Endothelial cell of umbilical vein (primary cell): ENCODE measurements at regions of chr12 and their contacts with region 1.

Region 1: GRCh38 chr12:86914716-86915115 is 658.5 kb upstream of the MGAT4C start:
- DNase-seq: peak; percentile 69
- H3K4me3 ChIP-seq: no peak overlapping the region
- H3K27ac ChIP-seq: no peak overlapping the region
- H3K4me1 ChIP-seq: no peaks in the 10 kb centered on the region
- H3K27me3 ChIP-seq: no peaks in the 10 kb centered on the region
- CTCF ChIP-seq: peak; percentile 34 to 56
- POLR2A ChIP-seq: no peak

Region 2: GRCh38 chr12:85468356-85469157 is 1446.2 kb before region 1 on chr12:
- CTCF ChIA-PET with region 1: interaction called, 3 read pairs
- POLR2A ChIA-PET with region 1: no interaction called
- dilution Hi-C with region 1: no loop called
- intact Hi-C with region 1: loop called (anchors 5 kb)
- DNase-seq: peak; percentile 80
- H3K4me3 ChIP-seq: peak overlapping the region in 2 of 3 experiments; percentile 41 to 67
- H3K27ac ChIP-seq: no peak overlapping the region
- H3K4me1 ChIP-seq: no peaks in the 10 kb centered on the region
- H3K27me3 ChIP-seq: peaks cover 0 to 2% of the 10 kb centered on the region in 2 experiments
- CTCF ChIP-seq: peak; percentile 64 to 69
- POLR2A ChIP-seq: no peak

Region 3: GRCh38 chr12:85951823-85952222 is 962.9 kb before region 1 on chr12:
- CTCF ChIA-PET with region 1: interaction called, 78 read pairs
- POLR2A ChIA-PET with region 1: no interaction called
- dilution Hi-C with region 1: no loop called
- intact Hi-C with region 1: loop called (anchors 1 kb)
- DNase-seq: peak; percentile 55
- H3K4me3 ChIP-seq: no peak overlapping the region
- H3K27ac ChIP-seq: no peak overlapping the region
- H3K4me1 ChIP-seq: peaks cover 4% of the 10 kb centered on the region
- H3K27me3 ChIP-seq: no peaks in the 10 kb centered on the region
- CTCF ChIP-seq: peak; percentile 17 to 25
- POLR2A ChIP-seq: no peak

Region 4: DNA sequence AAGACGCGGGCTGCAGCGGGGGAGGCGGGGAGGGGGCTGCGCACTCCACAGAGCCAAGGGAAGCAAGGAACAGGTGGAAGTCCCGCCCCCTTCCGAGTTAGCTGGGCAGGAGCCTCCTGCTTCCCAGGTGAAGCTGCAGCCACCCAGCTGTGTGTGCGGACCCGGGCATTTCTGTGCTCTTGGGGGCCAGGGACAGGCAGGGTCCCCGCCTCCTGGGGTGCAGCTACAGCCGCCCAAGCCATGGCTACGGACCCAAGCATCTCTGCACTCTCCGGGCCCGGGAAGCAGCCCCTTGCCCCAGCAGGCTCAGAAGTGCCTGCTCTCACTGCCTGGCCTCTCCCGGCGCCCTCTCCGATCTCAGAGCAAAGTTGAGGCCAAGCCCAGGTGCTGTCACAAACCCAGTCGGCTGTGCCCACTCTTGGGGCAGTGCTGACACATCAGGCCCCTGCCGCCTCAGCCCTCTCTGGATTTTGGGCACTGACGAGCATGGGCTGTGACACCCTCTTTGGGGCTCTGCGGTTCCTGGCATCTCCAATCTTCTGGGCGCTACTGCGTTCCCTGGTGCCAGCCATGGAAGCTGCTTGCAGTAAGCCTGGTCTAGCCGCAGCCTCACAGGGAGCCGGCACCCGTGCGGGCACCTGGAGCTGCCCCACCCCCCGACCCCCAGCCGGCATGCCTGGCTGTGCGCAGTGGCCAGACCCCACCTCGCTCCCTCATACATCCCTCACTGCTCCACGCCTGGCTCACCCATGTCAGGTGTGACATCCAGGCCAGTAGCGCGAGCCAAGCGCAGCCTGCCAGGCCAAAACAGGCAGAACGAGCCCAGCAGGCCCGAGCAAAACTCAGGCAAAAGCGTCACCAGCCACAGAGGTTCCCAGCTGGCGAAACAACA is 650.0 kb before region 1 on chr12:
- CTCF ChIA-PET with region 1: interaction called, 10 read pairs
- POLR2A ChIA-PET with region 1: no interaction called
- dilution Hi-C with region 1: no loop called
- intact Hi-C with region 1: loop called (anchors 2 kb)
- DNase-seq: no peak
- H3K4me3 ChIP-seq: peak overlapping the region in 1 of 3 experiments; percentile 13
- H3K27ac ChIP-seq: no peak overlapping the region
- H3K4me1 ChIP-seq: no peaks in the 10 kb centered on the region
- H3K27me3 ChIP-seq: no peaks in the 10 kb centered on the region
- CTCF ChIP-seq: no peak
- POLR2A ChIP-seq: no peak

Region 5: DNA sequence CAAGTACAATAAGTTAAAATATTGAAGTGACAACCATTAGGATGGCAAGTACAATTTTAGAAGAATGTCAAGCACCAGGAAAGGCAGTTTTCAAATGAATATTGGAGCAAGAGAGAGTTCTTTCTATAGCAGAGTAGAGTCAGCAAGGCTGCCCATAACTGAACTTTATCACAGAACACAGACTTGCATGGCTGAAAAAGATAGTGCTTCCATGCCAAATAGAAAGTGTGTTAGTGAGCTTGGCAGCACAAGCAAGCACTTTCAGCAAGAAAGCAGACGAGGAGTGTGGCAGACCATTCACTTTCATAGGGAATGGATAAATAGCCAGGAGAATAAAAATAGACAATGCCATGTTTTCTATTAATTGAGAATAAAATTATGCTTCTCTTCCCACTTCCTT is 11.6 kb before region 1 on chr12:
- CTCF ChIA-PET with region 1: interaction called, 18 read pairs
- POLR2A ChIA-PET with region 1: no interaction called
- dilution Hi-C with region 1: no loop called
- intact Hi-C with region 1: no loop called
- DNase-seq: no peak
- H3K4me3 ChIP-seq: no peak overlapping the region
- H3K27ac ChIP-seq: no peak overlapping the region
- H3K4me1 ChIP-seq: no peaks in the 10 kb centered on the region
- H3K27me3 ChIP-seq: no peaks in the 10 kb centered on the region
- CTCF ChIP-seq: no peak
- POLR2A ChIP-seq: no peak

Region 6: DNA sequence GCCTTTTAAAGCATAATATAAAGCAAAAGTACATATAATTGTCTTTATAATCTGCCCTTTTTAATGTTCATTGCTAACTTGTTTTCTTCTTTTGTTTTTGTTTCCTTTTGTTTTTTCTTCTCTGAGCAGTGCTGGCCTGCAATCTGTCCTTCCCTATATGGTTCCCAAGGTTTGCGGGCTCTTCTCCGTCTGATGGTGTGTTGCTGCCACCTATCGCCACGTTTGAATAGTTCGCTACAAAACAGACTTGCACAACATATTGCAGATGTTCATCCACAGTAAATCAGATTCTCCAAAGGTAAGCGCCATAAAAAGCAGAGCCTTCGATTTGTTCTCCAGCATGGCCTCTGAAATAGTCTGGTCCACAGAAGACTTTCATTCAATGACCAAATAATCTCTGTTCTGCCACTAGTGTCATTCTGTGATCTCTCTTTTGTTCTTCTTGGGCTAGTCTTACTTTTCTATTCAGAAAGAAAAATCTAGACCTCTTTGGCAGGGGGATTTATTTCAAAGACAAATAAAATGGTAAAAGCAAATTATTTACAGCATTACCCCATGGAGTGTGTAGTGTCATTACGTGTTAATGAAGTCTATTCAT is 1081.0 kb after region 1 on chr12:
- CTCF ChIA-PET with region 1: interaction called, 10 read pairs
- POLR2A ChIA-PET with region 1: no interaction called
- dilution Hi-C with region 1: no loop called
- intact Hi-C with region 1: no loop called
- DNase-seq: peak; percentile 74
- H3K4me3 ChIP-seq: no peak overlapping the region
- H3K27ac ChIP-seq: no peak overlapping the region
- H3K4me1 ChIP-seq: no peaks in the 10 kb centered on the region
- H3K27me3 ChIP-seq: no peaks in the 10 kb centered on the region
- CTCF ChIP-seq: peak; percentile 65 to 66
- POLR2A ChIP-seq: no peak